A673 (cell line): ENCODE measurements at regions of chr17 and their contacts with region 1.

Region 1: DNA sequence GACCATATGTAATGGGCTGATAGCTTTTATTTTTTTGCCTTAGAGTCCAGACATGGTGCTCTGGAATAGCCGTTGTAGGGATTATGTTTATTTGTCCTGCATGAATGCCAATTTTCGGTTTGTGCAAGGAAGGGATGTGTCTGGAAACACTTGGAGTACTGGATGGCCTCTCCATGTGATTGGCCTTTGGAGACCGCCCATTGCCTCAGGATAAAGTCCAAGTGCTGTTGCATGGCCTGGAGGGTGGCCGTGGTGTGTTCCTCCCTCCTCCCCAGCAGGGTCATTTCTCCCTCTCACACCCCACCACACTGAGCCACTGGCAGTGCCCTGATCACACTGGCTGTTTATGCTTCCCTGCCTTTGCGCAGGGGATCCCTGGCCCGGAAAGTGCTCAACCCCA is 94.0 kb downstream of the MSI2 start:
- DNase-seq: no peak
- H3K4me3 ChIP-seq: no peak overlapping the region
- H3K27ac ChIP-seq: no peak overlapping the region
- H3K4me1 ChIP-seq: no peaks in the 10 kb centered on the region
- H3K27me3 ChIP-seq: no peaks in the 10 kb centered on the region
- CTCF ChIP-seq: no peak

Region 2: GRCh38 chr17:57271821-57272220 is 78.5 kb before region 1 on chr17:
- CTCF ChIA-PET with region 1: no interaction called
- POLR2A ChIA-PET with region 1: interaction called, 10 read pairs
- intact Hi-C with region 1: no loop called
- DNase-seq: no peak
- H3K4me3 ChIP-seq: no peak overlapping the region
- H3K27ac ChIP-seq: no peak overlapping the region
- H3K4me1 ChIP-seq: no peaks in the 10 kb centered on the region
- H3K27me3 ChIP-seq: no peaks in the 10 kb centered on the region
- CTCF ChIP-seq: no peak

Region 3: GRCh38 chr17:57597531-57598453 is 247.5 kb after region 1 on chr17:
- CTCF ChIA-PET with region 1: no interaction called
- POLR2A ChIA-PET with region 1: no interaction called
- intact Hi-C with region 1: no loop called
- DNase-seq: peak; percentile 85
- H3K4me3 ChIP-seq: no peak overlapping the region
- H3K27ac ChIP-seq: no peak overlapping the region
- H3K4me1 ChIP-seq: peaks cover 10% of the 10 kb centered on the region
- H3K27me3 ChIP-seq: no peaks in the 10 kb centered on the region
- CTCF ChIP-seq: peak; percentile 92